ENCODE measurements at regions of chr3 and their contacts with region 1.

Region 1: DNA sequence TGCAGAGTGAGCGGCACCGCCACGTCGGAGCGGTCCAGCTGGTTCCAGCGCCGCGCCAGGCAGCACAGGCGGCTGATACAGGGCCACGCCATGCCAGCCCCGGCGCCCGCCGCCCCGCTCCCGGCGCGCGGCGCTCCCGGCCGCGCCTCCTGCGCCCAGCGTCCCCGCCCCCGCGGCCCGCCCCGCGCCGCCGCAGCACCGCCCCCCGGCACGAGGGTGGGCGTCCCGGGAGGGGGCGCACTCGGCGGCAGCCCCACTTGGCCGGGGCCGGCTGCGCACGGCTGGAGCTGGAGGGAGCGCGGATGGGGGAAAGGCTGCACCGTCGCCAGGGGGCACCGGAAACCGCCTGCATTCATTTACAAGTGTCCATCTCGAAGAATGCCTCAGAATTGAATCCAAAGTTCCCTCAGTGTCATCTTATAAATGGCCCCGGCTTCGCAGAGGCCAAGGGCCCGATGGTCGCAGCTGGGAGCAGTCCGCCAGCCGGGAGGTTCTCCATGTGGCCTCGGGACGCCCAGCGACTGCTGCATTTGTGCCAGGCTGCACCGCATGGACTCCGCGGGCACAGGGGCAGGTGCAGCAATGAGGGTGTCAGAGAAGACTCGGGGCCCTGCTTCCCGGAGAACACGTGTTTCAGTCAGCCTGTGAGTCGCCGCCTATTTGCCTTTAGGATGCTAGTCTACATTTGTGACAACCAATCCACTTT is at the start of gene MAP6D1:
- DNase-seq: peak; percentile 72 to 87
- H3K4me3 ChIP-seq: peak within 1 kb of the TSS; percentile 52
- H3K4me3 Mint-ChIP-seq: peak within 1 kb of the TSS; percentile 83
- H3K27ac Mint-ChIP-seq: peak within 1 kb of the TSS; percentile 57
- H3K4me1 ChIP-seq: peaks cover 8% of the 10 kb centered on the region
- H3K4me1 Mint-ChIP-seq: peaks cover 8% of the 10 kb centered on the region
- H3K27me3 ChIP-seq: no peaks in the 10 kb centered on the region
- H3K27me3 Mint-ChIP-seq: no peaks in the 10 kb centered on the region
- CTCF ChIP-seq: peak; percentile 48 to 53
- total RNA-seq, gene MAP6D1: 2.9 and 5.1 TPM in 2 replicates

Region 2: DNA sequence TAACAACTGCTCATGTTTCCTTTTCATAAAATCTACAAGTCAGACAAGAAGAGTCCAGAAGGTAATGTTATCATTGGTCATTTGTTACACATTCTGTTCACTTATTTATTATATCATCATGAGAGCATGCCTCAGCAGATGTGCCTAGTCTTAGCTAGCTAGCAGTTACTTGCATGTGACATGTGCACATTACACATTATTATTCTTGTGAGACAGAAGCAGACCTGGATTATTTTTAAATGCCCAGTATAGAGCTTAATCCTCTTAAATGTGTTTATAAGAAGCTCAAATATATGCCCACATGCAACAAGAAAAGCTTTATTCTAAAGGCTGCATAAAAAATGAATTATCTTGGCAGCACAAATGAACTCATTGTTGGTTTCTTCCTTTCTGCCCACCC is 115.4 kb before region 1 on chr3:
- CTCF ChIA-PET with region 1: no interaction called
- POLR2A ChIA-PET with region 1: no interaction called
- intact Hi-C with region 1: no loop called
- DNase-seq: no peak
- H3K4me3 ChIP-seq: no peak overlapping the region
- H3K4me3 Mint-ChIP-seq: no peak overlapping the region
- H3K27ac Mint-ChIP-seq: no peak overlapping the region
- H3K4me1 ChIP-seq: no peaks in the 10 kb centered on the region
- H3K4me1 Mint-ChIP-seq: no peaks in the 10 kb centered on the region
- H3K27me3 ChIP-seq: no peaks in the 10 kb centered on the region
- H3K27me3 Mint-ChIP-seq: no peaks in the 10 kb centered on the region
- CTCF ChIP-seq: no peak

Region 3: GRCh38 chr3:183884427-183885296 is 59.1 kb after region 1 on chr3 and contains the start of gene PARL:
- CTCF ChIA-PET with region 1: interaction called, 12 read pairs
- POLR2A ChIA-PET with region 1: interaction called, 3 read pairs
- intact Hi-C with region 1: loop called (anchors 1 kb)
- DNase-seq: peak; percentile 94 to 97
- H3K4me3 ChIP-seq: peak within 1 kb of the TSS; percentile 62
- H3K4me3 Mint-ChIP-seq: peak within 1 kb of the TSS; percentile 95
- H3K27ac Mint-ChIP-seq: peak within 1 kb of the TSS; percentile 92
- H3K4me1 ChIP-seq: no peaks in the 10 kb centered on the region; the same call in 1 of the 2 replicates
- H3K4me1 Mint-ChIP-seq: peaks cover 10% of the 10 kb centered on the region
- H3K27me3 ChIP-seq: no peaks in the 10 kb centered on the region
- H3K27me3 Mint-ChIP-seq: no peaks in the 10 kb centered on the region
- CTCF ChIP-seq: peak; percentile 81 to 95
- total RNA-seq, gene PARL: 91.3 and 97.0 TPM in 2 replicates